H1 (cell line): ENCODE measurements at regions of chr12 and their contacts with region 1.

Region 1: GRCh38 chr12:97960754-97961608 is 498.4 kb downstream of the RMST start:
- DNase-seq: peak in 1 of 2 experiments; percentile 64
- H3K4me3 ChIP-seq: no peak overlapping the region
- H3K27ac ChIP-seq: no peak overlapping the region
- H3K4me1 ChIP-seq: no peaks in the 10 kb centered on the region; a peak in 1 of 7 replicates
- H3K27me3 ChIP-seq: no peaks in the 10 kb centered on the region
- CTCF ChIP-seq: peak; percentile 30 to 94 (median 81)
- EP300 ChIP-seq: no peak
- POLR2A ChIP-seq: no peak
- RAD21 ChIP-seq: peak; percentile 74 to 81

Region 2: GRCh38 chr12:96985480-96986362 is 975.3 kb before region 1 on chr12:
- CTCF ChIA-PET with region 1: interaction called, 11 read pairs
- POLR2A ChIA-PET with region 1: no interaction called
- DNase-seq: peak in 1 of 2 experiments; percentile 82
- H3K4me3 ChIP-seq: peak overlapping the region; percentile 44 to 66 (median 51)
- H3K27ac ChIP-seq: no peak overlapping the region
- H3K4me1 ChIP-seq: peaks cover 0 to 14% (median 5%) of the 10 kb centered on the region in 4 experiments; a peak in 4 of 7 replicates
- H3K27me3 ChIP-seq: peaks cover 0 to 3% (median 2%) of the 10 kb centered on the region in 4 experiments; a peak in 3 of 7 replicates
- CTCF ChIP-seq: peak; percentile 83 to 97 (median 83)
- EP300 ChIP-seq: peak in 1 of 2 experiments; percentile 48; a peak in 1 of 3 replicates
- POLR2A ChIP-seq: no peak
- RAD21 ChIP-seq: peak; percentile 81 to 92

Region 3: GRCh38 chr12:97899956-97900355 is 61.0 kb before region 1 on chr12:
- CTCF ChIA-PET with region 1: no interaction called
- POLR2A ChIA-PET with region 1: no interaction called
- DNase-seq: no peak
- H3K4me3 ChIP-seq: no peak overlapping the region
- H3K27ac ChIP-seq: no peak overlapping the region
- H3K4me1 ChIP-seq: 0 out of 7 replicates have a peak, but pooled peaks cover 0 to 2% (median 0%) of the 10 kb centered on the region in 4 experiments
- H3K27me3 ChIP-seq: no peaks in the 10 kb centered on the region
- CTCF ChIP-seq: no peak
- EP300 ChIP-seq: no peak
- POLR2A ChIP-seq: no peak
- RAD21 ChIP-seq: no peak

Region 4: DNA sequence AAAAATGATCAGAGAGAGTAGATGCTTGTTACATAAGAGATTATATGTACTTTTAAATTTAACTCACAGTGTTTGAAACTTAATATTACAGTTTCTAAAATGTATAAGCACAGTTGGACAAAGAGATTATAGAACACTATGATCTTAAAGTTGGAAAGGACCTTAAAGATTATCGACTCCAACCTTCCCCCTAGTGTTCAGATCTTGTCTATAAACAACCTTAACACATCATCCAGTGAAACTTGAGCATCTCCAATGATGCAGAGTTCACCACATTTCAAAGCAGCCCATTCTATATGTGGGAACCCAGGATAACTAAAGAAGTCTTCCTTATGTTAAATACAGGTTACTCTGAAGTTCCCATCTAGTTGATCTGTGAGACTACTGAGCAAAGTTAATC is 17.6 kb before region 1 on chr12:
- CTCF ChIA-PET with region 1: interaction called, 15 read pairs
- POLR2A ChIA-PET with region 1: interaction called, 3 read pairs
- DNase-seq: no peak
- H3K4me3 ChIP-seq: no peak overlapping the region
- H3K27ac ChIP-seq: no peak overlapping the region
- H3K4me1 ChIP-seq: no peaks in the 10 kb centered on the region
- H3K27me3 ChIP-seq: no peaks in the 10 kb centered on the region
- CTCF ChIP-seq: peak in 1 of 3 experiments; percentile 16; a peak in 1 of 4 replicates
- EP300 ChIP-seq: no peak
- POLR2A ChIP-seq: no peak
- RAD21 ChIP-seq: peak; percentile 18 to 30; a peak in 3 of 4 replicates

Region 5: GRCh38 chr12:97984974-97985580 is 24.1 kb after region 1 on chr12:
- CTCF ChIA-PET with region 1: interaction called, 14 read pairs
- POLR2A ChIA-PET with region 1: no interaction called
- DNase-seq: no peak
- H3K4me3 ChIP-seq: no peak overlapping the region
- H3K27ac ChIP-seq: no peak overlapping the region
- H3K4me1 ChIP-seq: no peaks in the 10 kb centered on the region
- H3K27me3 ChIP-seq: no peaks in the 10 kb centered on the region
- CTCF ChIP-seq: no peak
- EP300 ChIP-seq: no peak
- POLR2A ChIP-seq: no peak
- RAD21 ChIP-seq: no peak

Region 6: GRCh38 chr12:98154850-98155249 is 193.9 kb after region 1 on chr12:
- CTCF ChIA-PET with region 1: interaction called, 16 read pairs
- POLR2A ChIA-PET with region 1: no interaction called
- DNase-seq: peak in 1 of 2 experiments; percentile 25
- H3K4me3 ChIP-seq: no peak overlapping the region
- H3K27ac ChIP-seq: no peak overlapping the region
- H3K4me1 ChIP-seq: no peaks in the 10 kb centered on the region; a peak in 1 of 7 replicates
- H3K27me3 ChIP-seq: no peaks in the 10 kb centered on the region
- CTCF ChIP-seq: peak; percentile 7 to 74 (median 68)
- EP300 ChIP-seq: no peak
- POLR2A ChIP-seq: no peak
- RAD21 ChIP-seq: peak; percentile 85 to 87